ENCODE measurements at regions of chr22 and their contacts with region 1.

Region 1: GRCh38 chr22:39319270-39320022 is at the start of gene RPL3:
- DNase-seq: peak; percentile 93 to 96
- ATAC-seq: peak; percentile 84 to 87
- H3K4me3 ChIP-seq: peak within 1 kb of the TSS; percentile 65 to 91 (median 84)
- H3K27ac ChIP-seq: peak within 1 kb of the TSS; percentile 86 to 98 (median 91)
- H3K4me1 ChIP-seq: peaks cover 42 to 44% of the 10 kb centered on the region in 2 donors
- H3K27me3 ChIP-seq: no peaks in the 10 kb centered on the region
- CTCF ChIP-seq: peak in 2 of 5 experiments; percentile 37 to 46
- POLR2A ChIP-seq: peak; percentile 94 to 96
- total RNA-seq, gene RPL3: 261 to 680 (median 391) TPM

Region 2: GRCh38 chr22:38872172-38872830 is 447.1 kb before region 1 on chr22 and contains the start of gene CBX6:
- in situ Hi-C with region 1: no loop called
- intact Hi-C with region 1: loop called (anchors 1 kb)
- DNase-seq: peak; percentile 91 to 93
- ATAC-seq: peak; percentile 83 to 87
- H3K4me3 ChIP-seq: peak within 1 kb of the TSS; percentile 77 to 98 (median 90)
- H3K27ac ChIP-seq: peak within 1 kb of the TSS; percentile 86 to 99 (median 97)
- H3K4me1 ChIP-seq: peaks cover 12 to 32% of the 10 kb centered on the region in 2 donors
- H3K27me3 ChIP-seq: no peaks in the 10 kb centered on the region
- CTCF ChIP-seq: peak in 2 of 5 experiments; percentile 25 to 41
- POLR2A ChIP-seq: peak; percentile 74 to 79
- total RNA-seq, gene CBX6: 8.4 to 21.5 (median 17.7) TPM

Region 3: GRCh38 chr22:39170825-39171622 is 148.4 kb before region 1 on chr22:
- in situ Hi-C with region 1: loop called in 3 of 4 experiments (anchors 5 kb)
- intact Hi-C with region 1: loop called (anchors 1 kb)
- DNase-seq: peak; percentile 48 to 72
- ATAC-seq: peak; percentile 81 to 87
- H3K4me3 ChIP-seq: peak overlapping the region in 1 of 4 donors; percentile 21
- H3K27ac ChIP-seq: peak overlapping the region in 3 of 4 donors; percentile 23 to 70 (median 32)
- H3K4me1 ChIP-seq: peaks cover 45 to 53% of the 10 kb centered on the region in 2 donors
- H3K27me3 ChIP-seq: no peaks in the 10 kb centered on the region
- CTCF ChIP-seq: peak; percentile 89 to 99 (median 98)
- POLR2A ChIP-seq: no peak

Region 4: GRCh38 chr22:39244496-39245129 is 74.8 kb before region 1 on chr22 and contains the start of gene PDGFB:
- in situ Hi-C with region 1: loop called in 1 of 4 experiments (anchors 5 kb)
- intact Hi-C with region 1: loop called (anchors 2 kb)
- DNase-seq: no peak
- ATAC-seq: peak in 1 of 2 donors; percentile 25
- H3K4me3 ChIP-seq: peak within 1 kb of the TSS; percentile 54 to 83 (median 62)
- H3K27ac ChIP-seq: peak within 1 kb of the TSS; percentile 91 to 97 (median 92)
- H3K4me1 ChIP-seq: peaks cover 33 to 48% of the 10 kb centered on the region in 2 donors
- H3K27me3 ChIP-seq: no peaks in the 10 kb centered on the region
- CTCF ChIP-seq: peak in 1 of 5 experiments; percentile 15
- POLR2A ChIP-seq: peak; percentile 38 to 41
- total RNA-seq, gene PDGFB: 6.0 to 20.0 (median 8.9) TPM

Region 5: GRCh38 chr22:39306581-39307361 is 12.7 kb before region 1 on chr22:
- in situ Hi-C with region 1: no loop called
- intact Hi-C with region 1: loop called (anchors 1 kb)
- DNase-seq: peak in 1 of 2 donors; percentile 39
- ATAC-seq: no peak
- H3K4me3 ChIP-seq: no peak overlapping the region
- H3K27ac ChIP-seq: no peak overlapping the region
- H3K4me1 ChIP-seq: peaks cover 4 to 8% of the 10 kb centered on the region in 2 donors
- H3K27me3 ChIP-seq: no peaks in the 10 kb centered on the region
- CTCF ChIP-seq: peak in 2 of 5 experiments; percentile 17 to 45
- POLR2A ChIP-seq: no peak

Region 6: DNA sequence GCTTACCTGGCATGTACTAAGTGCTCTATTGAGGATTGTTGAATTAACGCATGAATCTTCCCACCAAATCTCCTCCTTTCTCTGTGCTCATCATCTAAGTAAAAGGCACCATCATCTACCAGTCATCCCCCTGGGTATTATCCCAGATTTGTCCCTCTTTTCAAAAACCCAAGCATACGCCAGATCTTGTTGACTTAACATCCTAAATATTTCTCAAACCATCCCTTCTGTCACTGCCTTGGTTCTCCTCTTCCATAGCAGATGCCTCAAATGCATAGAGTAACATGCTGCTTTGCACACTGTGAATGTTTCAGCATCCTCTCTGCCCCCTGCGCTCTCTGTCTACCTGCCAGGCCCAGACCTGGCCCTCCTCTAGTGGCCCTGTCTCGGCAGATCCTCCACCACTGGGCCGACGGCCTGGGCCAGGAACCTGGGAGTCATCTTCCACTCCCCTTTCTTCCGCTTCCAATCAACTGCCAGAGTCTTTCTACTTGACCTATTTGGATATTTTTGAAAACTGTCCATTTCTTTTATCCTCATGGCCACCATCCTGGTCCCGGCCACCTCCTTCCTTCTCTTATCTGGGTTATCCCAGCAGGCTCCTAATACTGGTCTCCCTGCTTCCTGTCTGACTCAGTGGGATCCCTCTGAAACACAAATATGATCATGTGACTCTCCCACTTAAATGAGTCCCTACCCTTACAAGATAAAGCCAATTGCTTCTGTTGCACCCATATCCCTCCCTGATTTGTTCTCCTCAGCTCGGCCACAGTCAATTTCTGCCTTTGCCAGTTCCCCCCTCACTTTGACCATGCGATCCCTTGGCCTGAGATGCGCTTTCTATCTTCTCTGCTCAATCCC is 76.7 kb after region 1 on chr22:
- in situ Hi-C with region 1: no loop called
- intact Hi-C with region 1: loop called (anchors 1 kb)
- DNase-seq: no peak
- ATAC-seq: no peak
- H3K4me3 ChIP-seq: no peak overlapping the region
- H3K27ac ChIP-seq: no peak overlapping the region
- H3K4me1 ChIP-seq: peaks cover 10% of the 10 kb centered on the region in 2 donors
- H3K27me3 ChIP-seq: no peaks in the 10 kb centered on the region
- CTCF ChIP-seq: no peak
- POLR2A ChIP-seq: no peak

Measured in gastrocnemius medialis (tissue), 4 donors.